Activated CD4-positive, alpha-beta T cell treated with anti-CD3 and anti-CD28 coated beads, Interleukin-2, amount 10 ng/mL, durations not matched to agents 24 days and 14 days (primary cell): ENCODE measurements at regions of chr9 and their contacts with region 1.

Region 1: GRCh38 chr9:135955934-135956801 is 5.0 kb downstream of the UBAC1 start:
- DNase-seq: no peak
- H3K4me3 Mint-ChIP-seq: no peak overlapping the region
- H3K27ac Mint-ChIP-seq: no peak overlapping the region
- H3K4me1 Mint-ChIP-seq: peaks cover 17% of the 10 kb centered on the region
- H3K27me3 Mint-ChIP-seq: no peaks in the 10 kb centered on the region

Region 2: GRCh38 chr9:135898634-135899407 is 57.3 kb before region 1 on chr9:
- intact Hi-C with region 1: loop called (anchors 1 kb)
- DNase-seq: no peak
- H3K4me3 Mint-ChIP-seq: no peak overlapping the region
- H3K27ac Mint-ChIP-seq: no peak overlapping the region
- H3K4me1 Mint-ChIP-seq: peaks cover 40% of the 10 kb centered on the region
- H3K27me3 Mint-ChIP-seq: peaks cover 2% of the 10 kb centered on the region